Thyroid gland (tissue), 4 donors: ENCODE measurements at regions of chr21 and their contacts with region 1.

Region 1: DNA sequence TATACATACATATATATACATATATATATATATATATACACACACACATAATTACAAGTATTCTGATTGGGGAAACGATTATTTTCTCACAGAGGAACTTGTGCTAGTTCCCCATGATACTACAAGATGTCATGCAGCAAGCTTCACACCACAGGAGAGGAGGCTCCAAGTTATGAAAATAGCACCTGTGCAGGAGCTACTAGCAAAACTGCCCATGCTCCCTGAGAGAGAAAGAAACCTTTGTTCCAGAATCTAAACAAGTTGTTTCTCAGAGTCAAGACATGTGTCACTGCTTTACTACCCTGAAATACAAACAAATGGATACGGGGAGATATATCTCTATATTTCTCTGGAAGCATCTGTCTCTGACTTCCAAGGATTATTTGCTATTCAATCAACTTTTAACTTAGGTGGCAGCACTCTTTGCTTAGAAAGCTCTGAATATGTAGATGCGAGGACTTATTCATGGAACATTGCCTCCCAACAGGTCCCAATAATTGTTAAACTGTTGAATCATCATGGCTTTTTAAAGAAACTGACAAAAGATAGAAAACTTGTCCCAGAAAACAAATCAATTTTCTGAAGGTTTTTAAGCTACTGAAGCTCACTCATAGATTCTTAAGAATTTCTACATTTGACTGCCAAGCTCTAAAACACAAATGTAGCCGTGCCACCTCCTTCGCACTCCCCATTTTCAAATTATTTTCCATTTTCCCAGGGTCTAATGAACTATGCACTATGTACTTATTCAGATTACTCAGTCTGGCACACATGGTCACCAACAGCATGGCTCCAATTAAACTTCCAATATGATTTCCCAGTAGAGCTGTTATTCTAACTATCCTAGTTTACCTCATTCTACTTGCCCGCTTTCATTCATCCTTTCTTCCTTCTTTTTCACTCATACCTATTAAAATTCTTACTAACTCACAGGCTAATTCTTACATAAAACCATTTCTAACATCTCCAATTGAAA is 929.1 kb downstream of the LTN1 start:
- DNase-seq: no peak
- H3K4me3 ChIP-seq: no peak overlapping the region
- H3K27ac ChIP-seq: no peak overlapping the region
- H3K4me1 ChIP-seq: peaks cover 37 to 39% of the 10 kb centered on the region in 2 donors
- H3K27me3 ChIP-seq: no peaks in the 10 kb centered on the region
- CTCF ChIP-seq: no peak
- POLR2A ChIP-seq: no peak

Region 2: DNA sequence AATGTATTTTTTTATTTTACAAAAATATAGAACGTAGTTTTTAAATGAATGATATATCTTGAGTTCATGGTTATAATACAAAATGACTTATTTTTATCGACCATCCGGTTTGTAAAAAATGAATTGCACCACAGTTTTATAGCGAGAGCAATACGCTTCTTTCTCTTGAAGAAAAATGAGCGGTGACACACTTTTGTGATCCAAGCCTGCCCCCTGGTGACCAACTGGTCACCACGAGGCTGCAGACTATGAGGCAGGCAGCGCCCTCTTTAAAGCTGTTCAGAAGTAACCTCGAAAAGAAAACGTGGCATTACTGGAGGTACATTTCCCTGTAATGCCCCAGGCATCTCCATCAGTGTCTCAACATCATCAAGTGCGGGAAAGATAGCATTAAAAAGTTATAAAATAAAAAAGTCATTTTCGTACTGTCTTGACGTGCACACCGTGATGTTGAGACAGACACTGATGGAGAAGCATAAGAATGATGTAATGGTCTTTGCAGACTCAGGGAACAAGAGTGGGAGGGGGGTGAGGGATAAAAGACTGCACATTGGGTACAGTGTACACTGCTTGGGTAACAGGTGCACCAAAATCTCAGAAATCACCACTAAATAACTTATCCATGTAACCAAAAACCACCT is 362.4 kb before region 1 on chr21:
- intact Hi-C with region 1: loop called (anchors 10 kb)
- DNase-seq: peak; percentile 84 to 90
- H3K4me3 ChIP-seq: no peak overlapping the region
- H3K27ac ChIP-seq: no peak overlapping the region
- H3K4me1 ChIP-seq: no peaks in the 10 kb centered on the region
- H3K27me3 ChIP-seq: no peaks in the 10 kb centered on the region
- CTCF ChIP-seq: peak; percentile 48 to 85 (median 76)
- POLR2A ChIP-seq: no peak

Region 3: GRCh38 chr21:28160378-28160777 is 96.8 kb after region 1 on chr21:
- intact Hi-C with region 1: no loop called
- DNase-seq: peak; percentile 25 to 62
- H3K4me3 ChIP-seq: no peak overlapping the region
- H3K27ac ChIP-seq: no peak overlapping the region
- H3K4me1 ChIP-seq: peaks cover 0 to 9% of the 10 kb centered on the region in 2 donors
- H3K27me3 ChIP-seq: no peaks in the 10 kb centered on the region
- CTCF ChIP-seq: no peak
- POLR2A ChIP-seq: no peak